IMR-90 (cell line): ENCODE measurements at regions of chr10 and their contacts with region 1.

Region 1: DNA sequence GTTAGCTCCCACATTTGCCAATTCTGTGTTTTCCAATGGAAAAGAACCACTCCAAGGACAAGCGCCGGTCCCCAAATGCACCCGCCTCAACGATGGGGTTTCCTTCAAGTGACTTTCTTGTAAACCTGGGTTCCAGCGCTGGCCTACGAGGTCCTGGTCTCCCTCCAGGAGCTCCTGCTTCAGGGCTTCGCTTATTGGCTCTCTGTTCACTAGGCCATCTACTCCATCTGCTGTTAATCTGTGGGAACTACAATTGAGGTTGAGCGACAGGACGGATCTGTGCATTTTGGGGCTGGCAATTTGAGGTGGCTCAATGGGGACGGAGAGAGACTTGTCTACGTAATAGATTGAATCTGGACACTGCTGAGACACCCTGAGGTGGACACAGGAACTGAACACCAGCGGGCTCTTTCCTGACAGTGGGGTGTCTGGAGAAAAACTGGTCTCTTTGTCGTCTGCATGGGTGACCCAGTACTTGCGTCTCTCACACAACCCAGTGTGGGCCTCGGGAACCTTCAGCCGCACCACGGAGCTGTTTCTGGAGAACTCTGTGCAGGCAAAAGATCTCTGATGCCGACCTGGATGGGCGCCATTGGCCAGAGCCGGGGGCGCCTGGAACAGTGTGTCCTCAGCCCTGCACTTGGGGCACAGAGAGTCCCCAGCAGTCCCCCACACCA is 115.9 kb upstream of the ADAM12 start:
- DNase-seq: peak; percentile 64
- ATAC-seq: peak; percentile 93
- H3K4me3 ChIP-seq: no peak overlapping the region
- H3K27ac ChIP-seq: no peak overlapping the region
- H3K4me1 ChIP-seq: peaks cover 3% of the 10 kb centered on the region; the same call in 1 of the 2 replicates
- H3K27me3 ChIP-seq: peaks cover 6% of the 10 kb centered on the region; the same call in 1 of the 2 replicates
- CTCF ChIP-seq: peak; percentile 79
- POLR2A ChIP-seq: no peak
- RAD21 ChIP-seq: peak; percentile 93

Region 2: GRCh38 chr10:125928928-125929585 is 575.1 kb before region 1 on chr10:
- CTCF ChIA-PET with region 1: interaction called, 13 read pairs
- POLR2A ChIA-PET with region 1: no interaction called
- dilution Hi-C with region 1: no loop called
- in situ Hi-C with region 1: no loop called
- intact Hi-C with region 1: loop called (anchors 1 kb)
- DNase-seq: no peak
- ATAC-seq: no peak
- H3K4me3 ChIP-seq: no peak overlapping the region
- H3K27ac ChIP-seq: no peak overlapping the region
- H3K4me1 ChIP-seq: no peaks in the 10 kb centered on the region
- H3K27me3 ChIP-seq: no peaks in the 10 kb centered on the region; the same call in 1 of the 2 replicates
- CTCF ChIP-seq: no peak
- POLR2A ChIP-seq: no peak
- RAD21 ChIP-seq: no peak

Region 3: GRCh38 chr10:125976960-125977603 is 527.1 kb before region 1 on chr10:
- CTCF ChIA-PET with region 1: interaction called, 21 read pairs
- POLR2A ChIA-PET with region 1: no interaction called
- dilution Hi-C with region 1: no loop called
- in situ Hi-C with region 1: loop called (anchors 5 kb)
- intact Hi-C with region 1: loop called (anchors 1 kb)
- DNase-seq: no peak
- ATAC-seq: no peak
- H3K4me3 ChIP-seq: no peak overlapping the region
- H3K27ac ChIP-seq: no peak overlapping the region
- H3K4me1 ChIP-seq: 0 out of 2 replicates have a peak, but pooled peaks cover 2% of the 10 kb centered on the region
- H3K27me3 ChIP-seq: 0 out of 2 replicates have a peak, but pooled peaks cover 2% of the 10 kb centered on the region
- CTCF ChIP-seq: no peak
- POLR2A ChIP-seq: no peak
- RAD21 ChIP-seq: no peak

Region 4: DNA sequence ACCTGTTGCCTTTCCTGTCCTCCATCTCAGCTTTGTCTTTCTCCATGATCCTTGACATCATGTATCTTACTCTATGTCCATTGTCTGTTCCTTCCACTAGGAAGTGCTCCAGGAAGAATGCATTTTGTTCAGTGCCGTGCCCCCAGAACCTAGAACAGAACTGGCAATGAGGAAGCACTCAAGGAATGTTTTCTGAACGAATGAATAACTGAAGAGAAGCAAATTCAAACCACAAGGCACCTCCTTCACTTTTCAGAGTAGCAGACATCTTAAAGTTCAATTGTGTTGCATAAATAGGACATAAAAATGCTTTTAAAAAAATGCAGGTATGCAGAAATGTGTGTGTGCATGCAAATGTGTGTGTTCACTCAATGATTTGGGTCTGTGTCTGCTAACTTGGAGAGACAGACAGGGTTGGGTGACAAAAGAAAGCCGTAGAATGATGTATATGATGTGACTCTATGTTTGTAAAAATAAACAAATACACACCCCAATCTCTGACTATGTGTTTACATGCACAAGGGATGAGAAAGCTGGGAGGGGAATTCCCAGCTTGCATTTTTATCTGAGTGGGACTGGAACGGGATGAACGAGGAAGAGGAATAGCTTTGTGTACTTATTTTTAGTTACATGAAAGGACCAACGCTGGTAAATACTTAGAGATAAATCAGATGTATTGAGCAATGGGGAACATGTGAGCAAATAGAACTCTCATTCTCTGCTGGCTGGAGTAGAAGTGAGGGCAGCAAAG is 370.1 kb before region 1 on chr10:
- CTCF ChIA-PET with region 1: no interaction called
- POLR2A ChIA-PET with region 1: no interaction called
- dilution Hi-C with region 1: no loop called
- in situ Hi-C with region 1: no loop called
- intact Hi-C with region 1: loop called (anchors 10 kb)
- DNase-seq: peak; percentile 93
- ATAC-seq: peak; percentile 81
- H3K4me3 ChIP-seq: no peak overlapping the region
- H3K27ac ChIP-seq: no peak overlapping the region
- H3K4me1 ChIP-seq: peaks cover 9% of the 10 kb centered on the region
- H3K27me3 ChIP-seq: no peaks in the 10 kb centered on the region
- CTCF ChIP-seq: no peak
- POLR2A ChIP-seq: no peak
- RAD21 ChIP-seq: no peak

Region 5: GRCh38 chr10:126160971-126161659 is 343.1 kb before region 1 on chr10:
- CTCF ChIA-PET with region 1: no interaction called
- POLR2A ChIA-PET with region 1: no interaction called
- dilution Hi-C with region 1: no loop called
- in situ Hi-C with region 1: no loop called
- intact Hi-C with region 1: loop called (anchors 2 kb)
- DNase-seq: peak; percentile 37
- ATAC-seq: 0 out of 2 replicates have a peak, but pooled peaks have one; percentile 37
- H3K4me3 ChIP-seq: no peak overlapping the region
- H3K27ac ChIP-seq: no peak overlapping the region
- H3K4me1 ChIP-seq: no peaks in the 10 kb centered on the region
- H3K27me3 ChIP-seq: peaks cover 10% of the 10 kb centered on the region
- CTCF ChIP-seq: peak; percentile 43
- POLR2A ChIP-seq: no peak
- RAD21 ChIP-seq: peak; percentile 60

Region 6: GRCh38 chr10:126702181-126702580 is 198.0 kb after region 1 on chr10:
- CTCF ChIA-PET with region 1: no interaction called
- POLR2A ChIA-PET with region 1: no interaction called
- dilution Hi-C with region 1: no loop called
- in situ Hi-C with region 1: no loop called
- intact Hi-C with region 1: no loop called
- DNase-seq: peak; percentile 2
- ATAC-seq: no peak
- H3K4me3 ChIP-seq: no peak overlapping the region
- H3K27ac ChIP-seq: no peak overlapping the region
- H3K4me1 ChIP-seq: no peaks in the 10 kb centered on the region
- H3K27me3 ChIP-seq: no peaks in the 10 kb centered on the region
- CTCF ChIP-seq: no peak
- POLR2A ChIP-seq: no peak
- RAD21 ChIP-seq: no peak